CD4-positive, alpha-beta T cell (primary cell): ENCODE measurements at regions of chr10 and their contacts with region 1.

Region 1: GRCh38 chr10:113126229-113127201 is 176.5 kb downstream of the TCF7L2 start:
- DNase-seq: peak in 13 of 14 experiments; percentile 5 to 73 (median 24)
- ATAC-seq: peak; percentile 80
- H3K4me3 ChIP-seq: no peak overlapping the region
- H3K4me3 Mint-ChIP-seq: peak overlapping the region; percentile 26
- H3K27ac ChIP-seq: no peak overlapping the region
- H3K27ac Mint-ChIP-seq: no peak overlapping the region
- H3K4me1 ChIP-seq: no peaks in the 10 kb centered on the region
- H3K4me1 Mint-ChIP-seq: peaks cover 4% of the 10 kb centered on the region
- H3K27me3 ChIP-seq: peaks cover 8 to 25% of the 10 kb centered on the region in 2 experiments
- H3K27me3 Mint-ChIP-seq: peaks cover 67% of the 10 kb centered on the region
- CTCF ChIP-seq: no peak

Region 2: DNA sequence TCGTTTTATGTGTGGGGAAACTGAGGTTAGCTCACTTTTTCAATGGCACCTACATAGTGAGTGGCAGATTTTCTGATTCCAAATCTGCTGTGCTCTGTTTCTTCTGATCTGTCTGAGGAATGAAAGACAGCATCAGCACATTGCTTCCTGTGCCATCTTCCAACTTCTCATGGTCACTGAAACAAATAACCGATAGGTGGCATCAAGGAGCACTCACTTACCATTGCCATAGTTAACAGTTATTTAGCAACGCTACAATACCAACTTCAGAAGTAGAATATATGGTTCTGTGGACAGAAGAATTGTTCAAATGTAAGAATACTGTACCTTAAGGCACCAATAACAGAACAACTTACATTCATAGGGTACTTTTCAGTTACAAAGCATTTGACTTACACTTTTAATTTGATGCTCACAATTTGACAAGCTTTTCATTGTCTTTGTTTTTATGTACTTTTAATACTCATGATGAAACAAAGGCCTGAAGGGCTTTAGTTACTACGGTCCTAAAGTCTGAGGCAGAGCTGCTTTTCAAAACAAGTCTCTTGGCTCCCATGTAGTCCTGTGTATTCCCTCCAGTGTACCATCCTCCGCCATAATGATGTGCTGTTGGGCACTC is 405.3 kb before region 1 on chr10:
- CTCF ChIA-PET with region 1: no interaction called
- POLR2A ChIA-PET with region 1: no interaction called
- intact Hi-C with region 1: loop called (anchors 2 to 5 kb)
- DNase-seq: peak in 3 of 14 experiments; percentile 40 to 54 (median 51)
- ATAC-seq: no peak
- H3K4me3 ChIP-seq: no peak overlapping the region
- H3K4me3 Mint-ChIP-seq: no peak overlapping the region
- H3K27ac ChIP-seq: no peak overlapping the region
- H3K27ac Mint-ChIP-seq: no peak overlapping the region
- H3K4me1 ChIP-seq: no peaks in the 10 kb centered on the region
- H3K4me1 Mint-ChIP-seq: no peaks in the 10 kb centered on the region
- H3K27me3 ChIP-seq: no peaks in the 10 kb centered on the region
- H3K27me3 Mint-ChIP-seq: no peaks in the 10 kb centered on the region
- CTCF ChIP-seq: peak; percentile 63

Region 3: DNA sequence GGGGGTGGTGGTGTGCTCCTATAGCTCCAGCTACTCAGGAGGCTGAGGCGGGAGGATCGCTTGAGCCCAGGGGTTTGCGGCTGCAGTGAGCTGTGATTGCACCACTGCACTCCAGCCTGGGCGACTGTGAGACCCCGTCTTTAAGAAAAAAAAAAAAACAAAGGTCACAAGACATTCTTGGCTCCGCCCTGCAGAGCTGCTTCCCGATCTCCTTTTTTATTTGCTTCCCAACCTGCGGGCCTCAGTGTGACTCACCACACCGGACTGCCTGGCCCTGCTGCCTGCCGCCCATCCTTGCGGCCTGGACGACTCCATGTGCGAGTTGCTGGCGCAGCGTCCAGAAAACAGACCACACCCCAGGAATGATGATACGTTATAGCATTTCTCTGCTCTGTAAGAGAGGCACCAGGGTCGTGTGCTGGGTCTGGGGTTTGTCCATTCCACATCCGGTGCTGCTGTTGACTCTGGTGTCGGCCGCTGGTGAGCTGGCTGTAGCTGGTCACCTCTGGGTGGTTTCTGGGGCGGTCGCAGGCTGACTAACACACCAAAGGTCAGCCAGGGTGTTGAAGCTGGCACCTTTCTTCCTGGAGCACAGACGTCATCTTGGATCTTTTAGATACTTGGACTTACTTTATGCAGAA is 52.8 kb before region 1 on chr10:
- CTCF ChIA-PET with region 1: no interaction called
- POLR2A ChIA-PET with region 1: no interaction called
- intact Hi-C with region 1: no loop called
- DNase-seq: no peak
- ATAC-seq: no peak
- H3K4me3 ChIP-seq: no peak overlapping the region
- H3K4me3 Mint-ChIP-seq: no peak overlapping the region
- H3K27ac ChIP-seq: no peak overlapping the region
- H3K27ac Mint-ChIP-seq: no peak overlapping the region
- H3K4me1 ChIP-seq: no peaks in the 10 kb centered on the region
- H3K4me1 Mint-ChIP-seq: no peaks in the 10 kb centered on the region
- H3K27me3 ChIP-seq: no peaks in the 10 kb centered on the region
- H3K27me3 Mint-ChIP-seq: no peaks in the 10 kb centered on the region
- CTCF ChIP-seq: no peak

Region 4: GRCh38 chr10:113108212-113108835 is 18.2 kb before region 1 on chr10:
- CTCF ChIA-PET with region 1: no interaction called
- POLR2A ChIA-PET with region 1: no interaction called
- intact Hi-C with region 1: no loop called
- DNase-seq: peak in 4 of 14 experiments; percentile 3 to 46 (median 24)
- ATAC-seq: no peak
- H3K4me3 ChIP-seq: no peak overlapping the region
- H3K4me3 Mint-ChIP-seq: no peak overlapping the region
- H3K27ac ChIP-seq: no peak overlapping the region
- H3K27ac Mint-ChIP-seq: no peak overlapping the region
- H3K4me1 ChIP-seq: no peaks in the 10 kb centered on the region
- H3K4me1 Mint-ChIP-seq: no peaks in the 10 kb centered on the region
- H3K27me3 ChIP-seq: no peaks in the 10 kb centered on the region
- H3K27me3 Mint-ChIP-seq: no peaks in the 10 kb centered on the region
- CTCF ChIP-seq: peak; percentile 49

Region 5: GRCh38 chr10:113239566-113240350 is 113.2 kb after region 1 on chr10:
- CTCF ChIA-PET with region 1: no interaction called
- POLR2A ChIA-PET with region 1: no interaction called
- intact Hi-C with region 1: no loop called
- DNase-seq: no peak
- ATAC-seq: no peak
- H3K4me3 ChIP-seq: no peak overlapping the region
- H3K4me3 Mint-ChIP-seq: no peak overlapping the region
- H3K27ac ChIP-seq: no peak overlapping the region
- H3K27ac Mint-ChIP-seq: no peak overlapping the region
- H3K4me1 ChIP-seq: no peaks in the 10 kb centered on the region
- H3K4me1 Mint-ChIP-seq: peaks cover 8% of the 10 kb centered on the region
- H3K27me3 ChIP-seq: peaks cover 4 to 6% of the 10 kb centered on the region in 2 experiments
- H3K27me3 Mint-ChIP-seq: peaks cover 35% of the 10 kb centered on the region
- CTCF ChIP-seq: no peak